CD4-positive, alpha-beta T cell (primary cell): ENCODE measurements at regions of chr11 and their contacts with region 1.

Region 1: GRCh38 chr11:57800444-57801182 is 39.0 kb downstream of the CTNND1 start:
- DNase-seq: peak in 4 of 14 experiments; percentile 27 to 80 (median 78)
- ATAC-seq: peak; percentile 93
- H3K4me3 ChIP-seq: no peak overlapping the region
- H3K4me3 Mint-ChIP-seq: no peak overlapping the region
- H3K27ac ChIP-seq: peak overlapping the region in 1 of 2 donors; percentile 45
- H3K27ac Mint-ChIP-seq: peak overlapping the region; percentile 61
- H3K4me1 ChIP-seq: peaks cover 16% of the 10 kb centered on the region
- H3K4me1 Mint-ChIP-seq: peaks cover 28% of the 10 kb centered on the region
- H3K27me3 ChIP-seq: no peaks in the 10 kb centered on the region
- H3K27me3 Mint-ChIP-seq: no peaks in the 10 kb centered on the region
- CTCF ChIP-seq: peak; percentile 93

Region 2: GRCh38 chr11:57335343-57336110 is 465.1 kb before region 1 on chr11 and contains the start of gene SSRP1:
- CTCF ChIA-PET with region 1: no interaction called
- POLR2A ChIA-PET with region 1: no interaction called
- intact Hi-C with region 1: loop called in 1 of 2 experiments (anchors 5 kb)
- DNase-seq: peak; percentile 77 to 95 (median 86)
- ATAC-seq: peak; percentile 97
- H3K4me3 ChIP-seq: peak within 1 kb of the TSS; percentile 80
- H3K4me3 Mint-ChIP-seq: peak within 1 kb of the TSS; percentile 89
- H3K27ac ChIP-seq: peak within 1 kb of the TSS; percentile 72 to 85
- H3K27ac Mint-ChIP-seq: peak within 1 kb of the TSS; percentile 96
- H3K4me1 ChIP-seq: peaks cover 29% of the 10 kb centered on the region
- H3K4me1 Mint-ChIP-seq: peaks cover 33% of the 10 kb centered on the region
- H3K27me3 ChIP-seq: no peaks in the 10 kb centered on the region
- H3K27me3 Mint-ChIP-seq: no peaks in the 10 kb centered on the region
- CTCF ChIP-seq: no peak
- total RNA-seq, gene SSRP1: 36.7 to 41.2 TPM

Region 3: DNA sequence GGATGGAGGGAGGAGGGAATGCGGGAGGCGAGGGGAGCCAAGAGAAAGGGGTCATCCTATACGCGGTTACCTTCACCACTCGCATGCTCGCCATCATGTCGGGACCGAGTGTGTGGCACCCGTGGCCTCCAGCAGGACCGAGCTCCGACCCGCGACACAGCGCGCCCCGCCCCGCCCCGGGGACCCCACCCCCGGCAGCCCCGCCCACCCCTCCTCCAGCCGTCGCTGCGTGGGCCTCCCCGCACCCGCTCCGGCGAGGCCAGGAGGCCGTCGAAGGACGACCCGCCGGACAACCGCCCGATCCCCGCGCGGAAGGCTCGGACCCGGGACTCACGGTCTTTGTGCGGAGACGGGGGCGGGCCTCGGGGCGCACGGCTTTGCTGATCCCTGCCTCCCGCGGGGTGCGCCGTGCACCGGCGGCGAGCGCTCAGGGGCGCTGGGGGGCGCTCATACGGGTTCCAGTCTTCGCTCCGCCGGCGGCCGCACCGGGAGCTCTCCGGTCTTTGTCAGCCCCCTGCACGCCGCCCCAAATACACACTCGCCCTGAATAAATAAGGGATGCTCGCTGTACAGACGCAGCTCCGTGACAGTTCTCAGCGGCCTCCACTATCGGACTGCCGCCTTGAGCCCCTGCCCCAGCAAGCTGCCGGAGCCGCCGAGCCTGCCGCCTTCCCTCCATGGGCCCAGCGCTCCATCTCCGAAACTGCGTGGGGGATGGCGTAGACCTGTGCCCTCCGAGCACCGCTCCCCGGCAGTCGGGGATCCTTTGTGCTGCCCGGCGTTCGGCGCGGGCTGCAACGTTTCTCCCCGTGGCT is 232.9 kb before region 1 on chr11 and contains the start of gene UBE2L6:
- CTCF ChIA-PET with region 1: interaction called, 15 read pairs
- POLR2A ChIA-PET with region 1: interaction called, 8 read pairs
- intact Hi-C with region 1: loop called (anchors 1 kb)
- DNase-seq: peak; percentile 35 to 94 (median 74)
- ATAC-seq: peak; percentile 76
- H3K4me3 ChIP-seq: peak within 1 kb of the TSS; percentile 95
- H3K4me3 Mint-ChIP-seq: peak within 1 kb of the TSS; percentile 100
- H3K27ac ChIP-seq: peak within 1 kb of the TSS; percentile 80 to 82
- H3K27ac Mint-ChIP-seq: peak within 1 kb of the TSS; percentile 92
- H3K4me1 ChIP-seq: peaks cover 33% of the 10 kb centered on the region
- H3K4me1 Mint-ChIP-seq: peaks cover 53% of the 10 kb centered on the region
- H3K27me3 ChIP-seq: no peaks in the 10 kb centered on the region
- H3K27me3 Mint-ChIP-seq: no peaks in the 10 kb centered on the region
- CTCF ChIP-seq: no peak
- total RNA-seq, gene UBE2L6: 35.0 to 36.2 TPM

Region 4: DNA sequence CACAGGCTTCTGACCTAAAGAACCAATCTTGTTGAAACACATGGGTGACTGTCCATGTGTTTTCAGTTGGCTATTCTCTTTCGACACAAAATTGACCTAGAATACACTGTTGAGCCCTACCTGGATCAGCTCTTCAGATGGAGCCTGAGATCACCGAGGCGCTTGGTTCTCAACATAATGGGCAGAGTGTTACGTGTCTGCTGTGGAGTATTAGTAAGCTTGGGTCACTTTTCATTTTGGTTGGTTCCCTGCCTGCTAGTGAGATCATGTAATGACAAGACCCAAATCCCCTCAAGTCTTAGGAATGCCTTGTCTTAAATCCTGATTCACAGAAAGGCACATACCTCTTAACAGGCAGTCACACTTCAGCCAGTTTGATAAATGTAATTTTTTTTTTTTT is 97.3 kb before region 1 on chr11:
- CTCF ChIA-PET with region 1: interaction called, 12 read pairs
- POLR2A ChIA-PET with region 1: interaction called, 3 read pairs
- intact Hi-C with region 1: no loop called
- DNase-seq: no peak
- ATAC-seq: no peak
- H3K4me3 ChIP-seq: no peak overlapping the region
- H3K4me3 Mint-ChIP-seq: no peak overlapping the region
- H3K27ac ChIP-seq: no peak overlapping the region
- H3K27ac Mint-ChIP-seq: no peak overlapping the region
- H3K4me1 ChIP-seq: no peaks in the 10 kb centered on the region
- H3K4me1 Mint-ChIP-seq: peaks cover 4% of the 10 kb centered on the region
- H3K27me3 ChIP-seq: no peaks in the 10 kb centered on the region
- H3K27me3 Mint-ChIP-seq: no peaks in the 10 kb centered on the region
- CTCF ChIP-seq: no peak

Region 5: DNA sequence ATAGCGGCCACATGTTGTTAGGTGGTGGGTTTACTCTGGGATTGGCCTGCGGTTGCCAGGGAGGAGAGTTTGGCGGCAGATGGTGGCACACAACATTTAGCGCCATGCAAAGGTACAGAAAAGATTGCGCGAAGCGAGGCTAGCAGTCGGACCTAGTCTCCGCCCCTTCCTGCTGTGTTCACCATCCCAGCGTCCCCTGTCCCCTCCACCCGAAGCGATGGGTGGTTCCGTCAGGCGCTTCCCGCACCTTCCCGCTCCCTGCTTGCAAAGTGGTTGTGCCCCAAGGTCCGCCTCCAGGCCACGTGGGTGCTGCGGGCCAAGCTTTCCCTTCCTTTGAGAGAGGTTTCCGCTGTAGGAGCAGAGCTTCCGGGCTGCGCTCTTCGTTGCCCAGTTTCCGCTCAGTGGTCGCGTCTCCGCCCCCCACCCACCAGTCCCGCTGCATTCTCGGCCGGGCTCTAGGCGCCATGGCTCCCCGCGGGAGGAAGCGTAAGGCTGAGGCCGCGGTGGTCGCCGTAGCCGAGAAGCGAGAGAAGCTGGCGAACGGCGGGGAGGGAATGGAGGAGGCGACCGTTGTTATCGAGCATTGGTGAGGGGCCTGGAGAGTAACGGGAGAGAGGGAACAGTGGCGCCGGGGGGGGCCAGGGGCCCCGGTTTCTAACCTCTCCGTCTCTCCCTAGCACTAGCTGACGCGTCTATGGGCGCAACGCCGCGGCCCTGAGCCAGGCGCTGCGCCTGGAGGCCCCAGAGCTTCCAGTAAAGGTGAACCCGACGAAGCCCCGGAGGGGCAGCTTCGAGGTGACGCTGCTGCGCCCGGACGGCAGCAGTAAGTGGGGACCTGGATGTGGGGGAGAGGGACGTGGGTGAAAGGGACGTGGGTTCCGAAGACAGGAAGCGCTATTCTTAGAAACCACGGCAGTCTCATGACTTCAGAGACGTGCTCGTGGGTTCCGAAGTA is 59.2 kb before region 1 on chr11 and contains the start of gene SELENOH:
- CTCF ChIA-PET with region 1: interaction called, 45 read pairs
- POLR2A ChIA-PET with region 1: interaction called, 35 read pairs
- intact Hi-C with region 1: loop called in 1 of 2 experiments (anchors 2 kb)
- DNase-seq: peak; percentile 82 to 97 (median 90)
- ATAC-seq: peak; percentile 89
- H3K4me3 ChIP-seq: peak within 1 kb of the TSS; percentile 92
- H3K4me3 Mint-ChIP-seq: peak within 1 kb of the TSS; percentile 97
- H3K27ac ChIP-seq: peak within 1 kb of the TSS; percentile 91 to 96
- H3K27ac Mint-ChIP-seq: peak within 1 kb of the TSS; percentile 95
- H3K4me1 ChIP-seq: peaks cover 31% of the 10 kb centered on the region
- H3K4me1 Mint-ChIP-seq: peaks cover 38% of the 10 kb centered on the region
- H3K27me3 ChIP-seq: no peaks in the 10 kb centered on the region
- H3K27me3 Mint-ChIP-seq: no peaks in the 10 kb centered on the region
- CTCF ChIP-seq: no peak
- total RNA-seq, gene SELENOH: 48.0 to 48.5 TPM

Region 6: DNA sequence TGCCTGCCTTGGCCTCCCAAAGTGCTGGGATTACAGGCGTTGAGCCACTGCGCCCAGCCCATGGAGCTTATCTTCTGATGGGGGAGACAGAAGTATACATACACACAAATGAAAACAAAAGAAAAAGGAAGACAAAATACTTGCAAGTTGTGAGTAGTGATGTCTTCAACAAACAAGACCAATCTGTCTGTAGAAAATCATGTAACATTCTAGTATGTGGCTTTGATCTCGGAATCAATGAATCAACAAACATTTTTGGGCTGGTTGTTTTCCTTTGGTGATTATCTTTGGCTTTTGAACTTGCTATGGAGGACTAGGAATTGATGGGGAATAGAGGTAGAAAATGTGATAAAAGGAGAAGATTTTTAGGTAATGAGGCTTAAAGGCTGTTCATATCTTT is 42.4 kb before region 1 on chr11:
- CTCF ChIA-PET with region 1: interaction called, 10 read pairs
- POLR2A ChIA-PET with region 1: interaction called, 3 read pairs
- intact Hi-C with region 1: no loop called
- DNase-seq: no peak
- ATAC-seq: no peak
- H3K4me3 ChIP-seq: no peak overlapping the region
- H3K4me3 Mint-ChIP-seq: no peak overlapping the region
- H3K27ac ChIP-seq: no peak overlapping the region
- H3K27ac Mint-ChIP-seq: no peak overlapping the region
- H3K4me1 ChIP-seq: no peaks in the 10 kb centered on the region
- H3K4me1 Mint-ChIP-seq: peaks cover 16% of the 10 kb centered on the region
- H3K27me3 ChIP-seq: no peaks in the 10 kb centered on the region
- H3K27me3 Mint-ChIP-seq: no peaks in the 10 kb centered on the region
- CTCF ChIP-seq: no peak

Region 7: DNA sequence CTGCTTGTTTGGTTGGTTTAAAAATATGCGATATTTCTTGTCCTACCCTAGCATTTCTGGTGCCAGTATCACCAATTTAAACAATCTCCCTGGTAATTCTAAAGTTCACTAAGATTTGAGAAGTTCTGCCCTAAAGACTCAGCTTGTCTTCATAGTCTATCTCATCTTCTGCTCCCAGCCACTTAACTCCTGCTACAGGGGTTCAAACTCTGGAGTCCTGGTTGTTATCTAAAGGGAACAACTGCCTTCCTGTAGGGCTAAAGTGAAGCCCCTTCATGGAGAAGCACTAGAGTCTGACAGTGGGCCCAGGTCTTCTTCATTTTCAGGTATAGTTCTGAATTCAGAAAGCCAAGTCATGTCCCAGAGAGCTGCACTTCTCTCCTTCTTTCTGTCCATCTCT is 34.2 kb after region 1 on chr11:
- CTCF ChIA-PET with region 1: no interaction called
- POLR2A ChIA-PET with region 1: no interaction called
- intact Hi-C with region 1: no loop called
- DNase-seq: no peak
- ATAC-seq: no peak
- H3K4me3 ChIP-seq: no peak overlapping the region
- H3K4me3 Mint-ChIP-seq: no peak overlapping the region
- H3K27ac ChIP-seq: no peak overlapping the region
- H3K27ac Mint-ChIP-seq: no peak overlapping the region
- H3K4me1 ChIP-seq: no peaks in the 10 kb centered on the region
- H3K4me1 Mint-ChIP-seq: no peaks in the 10 kb centered on the region
- H3K27me3 ChIP-seq: peaks cover 4 to 11% of the 10 kb centered on the region in 2 experiments
- H3K27me3 Mint-ChIP-seq: peaks cover 55% of the 10 kb centered on the region
- CTCF ChIP-seq: no peak

Region 8: GRCh38 chr11:57936050-57936418 is 135.4 kb after region 1 on chr11:
- CTCF ChIA-PET with region 1: no interaction called
- POLR2A ChIA-PET with region 1: no interaction called
- intact Hi-C with region 1: no loop called
- DNase-seq: no peak
- ATAC-seq: no peak
- H3K4me3 ChIP-seq: no peak overlapping the region
- H3K4me3 Mint-ChIP-seq: no peak overlapping the region
- H3K27ac ChIP-seq: no peak overlapping the region
- H3K27ac Mint-ChIP-seq: no peak overlapping the region
- H3K4me1 ChIP-seq: no peaks in the 10 kb centered on the region
- H3K4me1 Mint-ChIP-seq: no peaks in the 10 kb centered on the region
- H3K27me3 ChIP-seq: peaks cover 0 to 6% of the 10 kb centered on the region in 2 experiments
- H3K27me3 Mint-ChIP-seq: peaks cover 19% of the 10 kb centered on the region
- CTCF ChIP-seq: no peak